Tibial artery (tissue), 4 donors: ENCODE measurements at regions of chr15 and their contacts with region 1.

Region 1: DNA sequence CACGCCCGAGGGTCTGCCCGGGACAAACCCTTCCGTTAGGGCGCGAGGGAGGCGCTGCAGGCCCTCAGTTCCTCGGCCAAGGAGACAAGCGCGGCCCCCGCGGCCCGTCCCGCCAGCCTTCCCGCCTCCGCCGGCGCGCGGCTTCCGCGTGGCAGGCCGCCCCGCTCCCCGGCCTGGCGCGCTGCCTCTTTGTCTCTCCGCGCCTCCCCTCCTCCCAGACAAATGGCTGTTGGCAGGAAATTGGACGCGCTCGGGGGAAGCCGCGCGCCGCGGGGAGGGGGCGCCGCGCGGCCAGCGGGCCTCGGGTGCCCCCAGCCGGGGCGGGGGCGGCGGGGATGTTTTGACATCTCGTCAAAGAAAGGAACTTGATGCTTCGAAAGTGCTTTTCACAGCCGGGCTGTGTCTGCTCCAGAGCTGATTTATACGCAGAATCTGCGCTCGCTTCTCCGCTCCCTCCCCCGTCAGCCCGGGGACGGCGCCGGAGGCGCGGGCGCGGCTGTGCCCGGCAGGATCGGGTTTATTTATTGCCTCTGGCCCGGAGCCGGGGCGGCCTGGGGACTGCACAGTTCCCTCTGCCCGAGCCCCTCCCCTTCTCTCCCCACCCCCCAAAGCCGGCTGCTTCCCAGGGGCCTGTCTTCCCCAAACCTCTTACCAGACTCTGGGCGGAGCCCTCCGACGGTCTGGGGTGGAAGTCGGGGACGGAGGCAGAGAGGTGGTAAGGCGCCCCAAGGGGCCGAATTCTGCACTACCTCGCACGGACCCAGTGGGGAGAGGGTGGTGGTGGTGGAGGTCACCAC is 20.7 kb downstream of the SHF start:
- DNase-seq: peak; percentile 89 to 92
- H3K4me3 ChIP-seq: peak overlapping the region; percentile 67 to 75
- H3K27ac ChIP-seq: peak overlapping the region; percentile 97
- H3K4me1 ChIP-seq: peaks cover 0 to 26% (median 14%) of the 10 kb centered on the region in 4 donors
- H3K27me3 ChIP-seq: no peaks in the 10 kb centered on the region
- CTCF ChIP-seq: peak; percentile 60 to 70

Region 2: DNA sequence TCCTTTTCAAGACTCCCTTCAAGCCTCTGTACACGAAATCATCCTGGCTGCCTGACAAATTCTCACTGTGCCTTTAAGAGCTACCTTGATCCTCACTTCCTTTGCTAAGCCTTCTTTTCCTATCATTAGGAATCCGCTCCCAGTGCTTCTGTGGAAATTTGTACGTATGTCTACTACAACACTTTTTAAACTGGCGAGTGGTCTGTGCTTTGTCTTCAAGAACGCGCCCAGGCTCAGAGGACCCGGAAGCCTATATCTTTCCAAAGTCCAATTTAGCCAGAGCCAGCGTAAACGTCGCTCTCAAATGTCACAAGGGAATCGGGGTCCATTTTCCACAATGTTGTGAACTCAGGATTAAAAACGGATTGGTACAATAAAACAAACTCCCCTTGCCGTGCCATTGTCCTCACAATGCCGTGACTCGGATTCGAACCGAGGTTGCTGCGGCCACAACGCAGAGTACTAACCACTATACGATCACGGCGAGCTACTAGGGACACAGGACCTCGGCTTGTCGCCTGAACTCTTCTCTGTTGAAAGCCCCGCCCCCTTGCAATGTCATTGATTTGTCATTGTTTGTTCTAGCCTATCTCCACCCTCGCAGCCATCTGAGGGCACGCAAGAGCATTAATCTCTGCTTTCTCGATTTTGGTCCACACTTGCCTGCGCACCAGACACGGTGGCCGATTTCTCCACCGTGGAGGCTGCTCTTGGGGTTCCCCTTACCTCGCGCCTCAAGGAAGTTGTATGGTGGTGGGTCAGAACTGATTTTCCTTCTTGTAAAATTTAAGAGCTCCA is 33.2 kb after region 1 on chr15:
- intact Hi-C with region 1: loop called (anchors 5 kb)
- DNase-seq: peak; percentile 98 to 99
- H3K4me3 ChIP-seq: peak overlapping the region; percentile 55 to 60
- H3K27ac ChIP-seq: peak overlapping the region; percentile 99
- H3K4me1 ChIP-seq: peaks cover 0 to 11% (median 0%) of the 10 kb centered on the region in 4 donors
- H3K27me3 ChIP-seq: no peaks in the 10 kb centered on the region
- CTCF ChIP-seq: no peak

Region 3: DNA sequence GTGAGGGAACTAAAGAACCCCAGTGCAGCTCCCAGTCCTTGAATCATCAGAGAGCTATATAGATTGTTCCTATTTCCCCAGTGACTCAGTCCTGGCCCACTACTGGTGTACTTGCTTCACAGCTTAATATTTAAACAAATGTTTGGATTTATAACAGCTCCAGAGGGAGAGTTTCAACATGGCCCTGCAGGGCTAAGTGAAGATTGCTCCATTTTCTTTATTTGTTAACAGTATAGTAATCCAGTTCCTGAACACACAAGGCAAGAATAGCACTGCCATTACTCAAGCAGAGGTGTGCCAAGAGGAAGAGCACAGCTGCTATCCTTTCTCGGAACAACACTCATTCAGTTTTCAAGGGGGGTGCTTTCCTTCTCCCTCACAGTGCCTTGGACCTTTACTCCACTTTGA is 474.3 kb after region 1 on chr15:
- intact Hi-C with region 1: loop called (anchors 10 kb)
- DNase-seq: peak in 1 of 2 donors; percentile 49
- H3K4me3 ChIP-seq: no peak overlapping the region
- H3K27ac ChIP-seq: peak overlapping the region; percentile 46 to 60
- H3K4me1 ChIP-seq: peaks cover 5 to 90% (median 66%) of the 10 kb centered on the region in 4 donors
- H3K27me3 ChIP-seq: no peaks in the 10 kb centered on the region
- CTCF ChIP-seq: no peak